H1 (cell line): ENCODE measurements at regions of chr1 and their contacts with region 1.

Region 1: DNA sequence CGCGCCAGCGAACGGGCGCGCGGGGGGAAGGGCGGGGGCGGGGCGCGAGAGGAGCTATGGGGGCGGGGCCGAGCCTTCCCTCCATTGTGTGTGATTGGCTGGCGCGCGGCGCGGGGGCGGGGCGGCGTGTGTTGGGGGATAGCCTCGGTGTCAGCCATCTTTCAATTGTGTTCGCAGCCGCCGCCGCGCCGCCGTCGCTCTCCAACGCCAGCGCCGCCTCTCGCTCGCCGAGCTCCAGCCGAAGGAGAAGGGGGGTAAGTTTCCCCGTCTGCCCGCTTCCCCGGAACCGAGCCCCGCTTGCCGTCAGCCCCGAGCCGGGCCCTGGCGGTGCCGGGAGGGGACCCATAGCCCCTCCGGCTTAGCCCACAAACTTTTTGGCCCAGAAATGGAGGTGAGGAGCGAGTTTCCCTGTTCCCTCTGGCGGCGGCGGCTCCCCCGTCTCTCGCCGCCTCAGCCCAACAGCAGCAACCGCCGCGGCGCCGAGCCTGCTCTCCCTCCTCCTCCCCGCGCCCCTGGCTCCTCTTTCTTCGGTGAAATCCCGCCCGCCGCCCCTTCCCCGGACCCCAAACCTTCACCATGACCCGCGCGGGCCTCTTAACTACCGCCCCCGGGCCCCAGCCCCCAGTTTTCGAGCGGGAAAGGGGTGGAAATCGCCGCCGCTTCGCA is at the start of gene H3-3A:
- DNase-seq: peak; percentile 82 to 98
- H3K4me3 ChIP-seq: peak within 1 kb of the TSS; percentile 91 to 100 (median 94)
- H3K27ac ChIP-seq: peak within 1 kb of the TSS; percentile 95
- H3K4me1 ChIP-seq: peaks cover 0 to 9% (median 2%) of the 10 kb centered on the region in 4 experiments; a peak in 4 of 7 replicates
- H3K27me3 ChIP-seq: no peaks in the 10 kb centered on the region
- CTCF ChIP-seq: no peak
- EP300 ChIP-seq: no peak
- POLR2A ChIP-seq: peak; percentile 80 to 97
- RAD21 ChIP-seq: no peak
- total RNA-seq, gene H3-3A: 1,213 and 1,223 TPM in 2 replicates

Region 2: DNA sequence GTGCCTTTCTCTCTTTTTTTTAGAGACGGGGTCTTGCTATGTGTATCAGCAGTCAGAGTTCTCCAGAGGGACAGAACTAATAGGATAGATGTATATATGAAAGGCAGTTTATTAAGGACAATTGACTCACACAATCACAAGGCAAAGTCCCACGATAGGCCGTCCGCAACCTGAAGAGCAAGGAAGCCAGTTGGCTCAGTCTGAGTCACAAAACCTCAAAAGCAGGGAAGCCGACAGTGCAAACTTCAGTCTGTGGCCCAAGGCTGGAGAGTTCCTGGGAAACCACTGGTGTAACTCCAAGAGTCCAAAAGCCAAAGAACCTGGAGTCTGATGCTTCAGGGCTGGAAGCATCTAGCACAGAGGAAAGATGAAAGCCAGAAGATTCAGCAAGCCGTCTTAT is 16.5 kb before region 1 on chr1:
- CTCF ChIA-PET with region 1: interaction called, 6 read pairs
- POLR2A ChIA-PET with region 1: interaction called, 23 read pairs
- DNase-seq: no peak
- H3K4me3 ChIP-seq: no peak overlapping the region
- H3K27ac ChIP-seq: no peak overlapping the region
- H3K4me1 ChIP-seq: no peaks in the 10 kb centered on the region
- H3K27me3 ChIP-seq: no peaks in the 10 kb centered on the region
- CTCF ChIP-seq: no peak
- EP300 ChIP-seq: no peak
- POLR2A ChIP-seq: no peak
- RAD21 ChIP-seq: no peak

Region 3: DNA sequence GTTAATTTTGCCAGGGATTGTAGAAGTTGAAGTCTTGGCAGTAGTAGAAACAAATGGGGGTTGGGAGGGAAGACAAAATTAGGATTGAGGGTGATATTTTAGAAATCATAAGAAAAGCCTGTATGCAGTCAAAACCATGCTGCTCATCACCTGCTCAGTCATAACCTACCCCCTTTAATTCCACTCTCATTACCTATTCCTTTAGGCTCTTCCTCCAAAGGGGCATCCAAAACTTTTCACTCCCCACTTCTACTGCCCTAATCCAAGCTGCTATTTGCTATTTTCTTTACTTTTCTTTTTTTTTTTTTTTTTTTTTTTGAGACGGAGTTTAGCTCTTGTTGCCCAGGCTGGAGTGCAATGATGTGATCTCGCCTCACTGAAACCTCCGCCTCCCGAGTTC is 11.4 kb after region 1 on chr1:
- CTCF ChIA-PET with region 1: interaction called, 36 read pairs
- POLR2A ChIA-PET with region 1: interaction called, 43 read pairs
- DNase-seq: no peak
- H3K4me3 ChIP-seq: no peak overlapping the region
- H3K27ac ChIP-seq: no peak overlapping the region
- H3K4me1 ChIP-seq: no peaks in the 10 kb centered on the region
- H3K27me3 ChIP-seq: no peaks in the 10 kb centered on the region
- CTCF ChIP-seq: no peak
- EP300 ChIP-seq: no peak
- POLR2A ChIP-seq: peak; percentile 50 to 82; a peak in 2 of 3 replicates
- RAD21 ChIP-seq: no peak

Region 4: DNA sequence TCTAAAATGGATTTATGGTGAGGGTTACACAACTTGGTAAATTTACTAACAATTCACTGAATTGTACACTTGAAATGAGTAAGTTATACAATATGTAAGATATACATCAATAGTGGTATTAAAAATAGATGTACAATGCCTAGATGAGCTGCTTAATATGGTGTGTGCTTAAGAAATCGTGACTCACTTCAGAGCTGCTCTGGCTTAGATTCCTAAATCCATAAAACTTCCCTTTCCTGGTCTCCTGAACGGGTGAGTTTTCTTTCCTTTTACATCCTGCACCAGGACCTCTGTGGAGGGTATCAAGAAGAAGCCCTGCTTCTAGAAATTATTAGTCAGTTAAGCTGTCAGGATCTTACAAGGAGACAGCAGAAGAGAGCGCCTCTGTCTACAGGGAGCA is 30.3 kb after region 1 on chr1:
- CTCF ChIA-PET with region 1: interaction called, 14 read pairs
- POLR2A ChIA-PET with region 1: interaction called, 13 read pairs
- DNase-seq: no peak
- H3K4me3 ChIP-seq: no peak overlapping the region
- H3K27ac ChIP-seq: no peak overlapping the region
- H3K4me1 ChIP-seq: peaks cover 0 to 3% (median 1%) of the 10 kb centered on the region in 4 experiments; a peak in 2 of 7 replicates
- H3K27me3 ChIP-seq: no peaks in the 10 kb centered on the region
- CTCF ChIP-seq: no peak
- EP300 ChIP-seq: no peak
- POLR2A ChIP-seq: no peak
- RAD21 ChIP-seq: no peak

Region 5: GRCh38 chr1:226109829-226110248 is 47.1 kb after region 1 on chr1:
- CTCF ChIA-PET with region 1: interaction called, 21 read pairs
- POLR2A ChIA-PET with region 1: interaction called, 48 read pairs
- DNase-seq: peak in 1 of 2 experiments; percentile 82
- H3K4me3 ChIP-seq: peak overlapping the region; percentile 59 to 83 (median 60)
- H3K27ac ChIP-seq: no peak overlapping the region
- H3K4me1 ChIP-seq: peaks cover 15 to 37% (median 29%) of the 10 kb centered on the region in 4 experiments
- H3K27me3 ChIP-seq: peaks cover 0 to 6% (median 3%) of the 10 kb centered on the region in 4 experiments; a peak in 5 of 7 replicates
- CTCF ChIP-seq: 0 out of 4 replicates have a peak, but pooled peaks of 1 of the 3 experiments have one; percentile 8
- EP300 ChIP-seq: no peak
- POLR2A ChIP-seq: no peak
- RAD21 ChIP-seq: no peak; a peak in 1 of 4 replicates